ENCODE measurements at regions of chr3 and their contacts with region 1.

Region 1: DNA sequence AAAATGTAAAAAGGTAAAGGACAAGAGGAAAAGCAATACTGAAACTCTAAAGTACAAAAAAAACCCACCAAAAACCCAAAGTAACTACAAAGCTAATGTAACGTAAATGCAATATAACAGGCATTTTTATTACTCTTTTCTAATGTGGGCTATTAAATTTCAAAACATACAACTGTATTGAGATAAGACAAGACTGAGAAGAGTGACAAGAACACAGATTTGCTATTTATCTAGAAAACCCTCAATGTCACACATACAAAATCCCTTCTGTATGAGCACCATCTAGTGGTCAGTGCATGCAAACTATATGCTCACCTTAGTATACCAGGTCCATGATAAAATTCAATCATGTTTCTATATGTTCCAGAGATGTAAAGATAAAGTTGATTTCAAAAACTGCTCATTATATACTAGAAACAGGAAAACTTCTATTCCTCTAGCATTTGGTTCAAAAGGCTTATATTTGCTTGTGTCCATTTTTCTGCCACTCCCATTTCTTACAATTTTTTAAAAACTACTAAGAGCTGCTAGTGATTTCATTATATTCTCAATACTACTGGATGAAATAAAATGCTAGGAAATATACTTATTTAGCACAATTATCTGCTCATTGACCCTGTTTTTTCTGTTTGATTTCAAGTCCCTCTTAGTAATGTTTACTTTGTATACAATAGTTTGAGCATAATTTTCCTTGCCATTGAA is 111.4 kb downstream of the DLG1 start:
- DNase-seq: peak; percentile 77
- ATAC-seq: peak; percentile 91
- H3K4me3 ChIP-seq: no peak overlapping the region
- H3K27ac ChIP-seq: no peak overlapping the region
- H3K4me1 ChIP-seq: peaks cover 14% of the 10 kb centered on the region
- H3K27me3 ChIP-seq: no peaks in the 10 kb centered on the region
- CTCF ChIP-seq: peak; percentile 94

Region 2: DNA sequence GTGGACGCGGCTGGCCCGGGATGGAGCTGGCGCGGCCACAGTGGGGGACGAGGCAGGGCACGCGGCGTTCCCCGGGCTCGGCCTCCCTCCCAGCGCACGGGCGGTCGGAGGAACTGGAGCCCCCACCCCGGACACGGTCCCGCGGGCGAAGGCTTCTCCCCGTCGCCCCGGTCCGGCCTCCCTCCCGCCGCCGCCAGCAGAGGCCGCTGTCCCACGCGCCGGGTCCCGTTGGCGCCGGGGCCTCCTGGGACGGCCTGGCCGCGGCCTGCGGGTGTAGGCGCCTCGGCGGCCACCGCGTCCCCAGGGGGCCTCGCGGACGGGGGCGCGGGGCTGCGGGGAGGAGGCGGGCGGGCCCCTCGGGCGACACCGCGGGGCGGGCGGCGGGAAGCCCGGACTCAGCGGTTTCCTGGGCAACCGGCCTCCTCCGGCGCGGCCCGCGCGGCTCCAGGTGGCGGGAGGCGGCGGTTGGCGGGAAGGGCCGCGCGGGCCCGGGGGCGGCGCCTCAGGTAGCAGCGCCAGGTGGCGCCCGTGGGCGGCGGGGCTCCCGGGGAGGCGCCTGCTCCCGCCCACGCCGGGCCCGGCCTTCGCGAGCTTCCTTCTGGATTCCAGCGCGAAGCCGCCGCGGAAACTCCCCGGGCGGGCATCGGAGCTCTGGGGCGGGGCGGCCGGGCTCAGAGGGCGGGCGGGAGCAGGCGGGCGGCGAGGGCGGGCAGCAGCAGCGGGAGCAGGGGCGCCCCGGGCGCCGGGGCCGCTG is 184.2 kb before region 1 on chr3:
- CTCF ChIA-PET with region 1: no interaction called
- POLR2A ChIA-PET with region 1: no interaction called
- intact Hi-C with region 1: loop called (anchors 1 kb)
- DNase-seq: peak; percentile 88
- ATAC-seq: peak; percentile 78
- H3K4me3 ChIP-seq: peak overlapping the region; percentile 83
- H3K27ac ChIP-seq: no peak overlapping the region
- H3K4me1 ChIP-seq: peaks cover 12% of the 10 kb centered on the region
- H3K27me3 ChIP-seq: no peaks in the 10 kb centered on the region
- CTCF ChIP-seq: peak; percentile 56

Region 3: GRCh38 chr3:197068077-197068476 is 119.0 kb before region 1 on chr3:
- CTCF ChIA-PET with region 1: no interaction called
- POLR2A ChIA-PET with region 1: no interaction called
- intact Hi-C with region 1: loop called (anchors 10 kb)
- DNase-seq: no peak
- ATAC-seq: no peak
- H3K4me3 ChIP-seq: no peak overlapping the region
- H3K27ac ChIP-seq: no peak overlapping the region
- H3K4me1 ChIP-seq: no peaks in the 10 kb centered on the region
- H3K27me3 ChIP-seq: no peaks in the 10 kb centered on the region
- CTCF ChIP-seq: no peak